IMR-90 (cell line): ENCODE measurements at regions of chr2 and their contacts with region 1.

Region 1: DNA sequence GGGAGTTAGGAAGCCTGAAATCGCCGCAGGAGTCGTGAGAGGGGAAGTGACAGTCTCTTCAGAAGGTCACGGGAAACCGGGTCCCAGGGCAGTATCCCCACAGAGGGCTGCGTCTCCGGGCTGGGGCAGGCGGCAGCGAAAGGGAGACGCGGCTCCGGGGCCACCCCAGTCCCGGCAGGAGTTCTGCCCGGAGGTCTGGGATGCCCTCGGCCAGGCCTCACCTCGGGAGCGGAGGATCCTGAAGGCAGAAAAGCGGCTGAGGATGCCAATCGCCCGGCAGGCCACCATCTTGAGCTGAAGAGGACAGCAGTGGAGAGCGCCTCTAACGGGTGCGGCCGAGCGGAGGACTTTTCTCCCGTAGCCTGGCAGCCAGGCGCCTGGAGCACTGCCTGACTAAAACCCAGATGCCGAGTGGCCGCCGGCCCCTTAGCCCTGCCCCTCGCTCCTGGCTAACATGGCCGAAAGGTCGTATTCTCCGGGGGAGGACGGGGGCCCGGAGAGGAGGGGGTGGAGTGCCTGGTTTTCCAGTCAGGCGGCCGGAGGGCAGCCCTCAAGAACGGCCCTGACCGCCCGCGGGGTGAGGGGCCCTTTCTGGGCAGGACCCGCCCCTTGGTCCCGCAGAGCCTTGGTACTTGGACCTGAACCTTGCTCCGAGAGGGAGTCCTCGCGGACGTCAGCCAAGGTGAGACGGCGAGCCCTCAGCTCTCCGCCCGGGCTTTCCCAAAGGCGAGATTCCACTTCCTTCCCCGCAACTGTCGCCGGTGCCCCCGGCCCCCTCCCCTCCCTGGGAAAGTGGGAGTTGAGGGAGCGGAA is at the starts of genes HADHA and HADHB:
- DNase-seq: peak; percentile 87
- ATAC-seq: peak; percentile 94
- H3K4me3 ChIP-seq: peak within 1 kb of the TSS; percentile 91
- H3K27ac ChIP-seq: peak within 1 kb of the TSS; percentile 91
- H3K4me1 ChIP-seq: peaks cover 6% of the 10 kb centered on the region
- H3K27me3 ChIP-seq: no peaks in the 10 kb centered on the region
- CTCF ChIP-seq: 0 out of 2 replicates have a peak, but pooled peaks have one; percentile 21
- POLR2A ChIP-seq: peak; percentile 87
- RAD21 ChIP-seq: no peak
- total RNA-seq, gene HADHA: 111 TPM in 2 replicates
- total RNA-seq, gene HADHB: 79.8 and 80.5 TPM in 2 replicates

Region 2: GRCh38 chr2:26274058-26274613 is 29.6 kb after region 1 on chr2:
- CTCF ChIA-PET with region 1: no interaction called
- POLR2A ChIA-PET with region 1: no interaction called
- dilution Hi-C with region 1: no loop called
- in situ Hi-C with region 1: no loop called
- intact Hi-C with region 1: no loop called
- DNase-seq: peak; percentile 90
- ATAC-seq: peak; percentile 74
- H3K4me3 ChIP-seq: no peak overlapping the region
- H3K27ac ChIP-seq: peak overlapping the region; percentile 60
- H3K4me1 ChIP-seq: peaks cover 7% of the 10 kb centered on the region; the same call in 1 of the 2 replicates
- H3K27me3 ChIP-seq: no peaks in the 10 kb centered on the region
- CTCF ChIP-seq: no peak
- POLR2A ChIP-seq: no peak
- RAD21 ChIP-seq: no peak

Region 3: DNA sequence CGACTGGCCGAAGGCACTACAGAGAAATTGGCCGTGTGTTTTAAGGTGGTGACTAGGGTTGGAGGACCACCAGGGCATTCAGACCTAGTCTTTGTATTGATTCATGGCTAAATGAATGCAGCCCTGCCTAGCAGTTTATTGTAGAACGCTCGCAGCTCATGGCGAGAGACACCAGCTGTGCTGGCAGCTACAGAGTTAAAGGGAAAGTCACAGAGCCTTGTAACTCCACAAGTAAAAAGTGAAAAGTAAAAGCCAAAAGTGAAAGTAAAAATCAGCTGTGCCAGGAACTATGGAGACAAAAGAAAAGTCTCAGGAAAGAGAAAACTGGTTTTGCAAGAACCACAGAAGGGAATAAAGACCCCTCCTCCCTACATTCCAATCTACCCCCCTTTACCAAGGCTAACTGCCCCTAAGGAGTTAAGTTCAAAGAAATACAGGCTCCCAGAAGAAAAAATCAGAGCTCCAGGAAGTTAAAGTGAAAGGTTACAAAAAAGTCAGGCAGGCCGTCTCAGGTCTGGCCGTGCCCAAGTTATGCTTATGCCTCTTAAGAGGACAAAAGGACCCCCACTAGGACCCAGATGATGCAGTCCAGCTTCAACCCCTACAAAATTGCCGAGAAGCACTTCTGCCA is 55.1 kb after region 1 on chr2:
- CTCF ChIA-PET with region 1: no interaction called
- POLR2A ChIA-PET with region 1: no interaction called
- dilution Hi-C with region 1: no loop called
- in situ Hi-C with region 1: no loop called
- intact Hi-C with region 1: loop called (anchors 1 kb)
- DNase-seq: peak; percentile 68
- ATAC-seq: peak; percentile 69
- H3K4me3 ChIP-seq: peak overlapping the region; percentile 31
- H3K27ac ChIP-seq: peak overlapping the region; percentile 76
- H3K4me1 ChIP-seq: peaks cover 12% of the 10 kb centered on the region
- H3K27me3 ChIP-seq: no peaks in the 10 kb centered on the region
- CTCF ChIP-seq: no peak
- POLR2A ChIP-seq: no peak
- RAD21 ChIP-seq: no peak

Region 4: DNA sequence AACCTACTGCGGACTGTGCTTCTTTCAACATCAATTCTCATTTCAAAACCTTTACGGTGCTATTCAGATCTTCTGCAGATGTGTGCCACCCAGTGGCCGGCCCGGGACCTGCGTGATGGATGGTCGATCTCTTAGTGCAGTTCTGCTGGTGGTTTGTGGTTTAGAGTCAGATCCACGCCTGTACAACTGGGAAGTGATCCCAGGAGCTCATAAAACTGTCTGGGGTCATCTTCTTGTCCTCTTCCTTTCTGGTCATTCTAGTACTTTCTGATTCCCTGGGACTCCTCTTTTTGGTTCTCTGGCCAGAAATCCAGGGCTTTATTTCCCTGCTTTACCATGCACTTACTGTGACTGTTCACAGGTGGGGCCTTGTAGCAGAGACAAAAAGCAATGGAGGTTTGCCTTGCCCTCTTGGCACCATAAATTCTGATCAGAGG is 85.6 kb after region 1 on chr2:
- CTCF ChIA-PET with region 1: no interaction called
- POLR2A ChIA-PET with region 1: no interaction called
- dilution Hi-C with region 1: no loop called
- in situ Hi-C with region 1: no loop called
- intact Hi-C with region 1: loop called (anchors 1 kb)
- DNase-seq: peak; percentile 79
- ATAC-seq: peak; percentile 94
- H3K4me3 ChIP-seq: no peak overlapping the region
- H3K27ac ChIP-seq: no peak overlapping the region
- H3K4me1 ChIP-seq: peaks cover 6% of the 10 kb centered on the region
- H3K27me3 ChIP-seq: peaks cover 6% of the 10 kb centered on the region
- CTCF ChIP-seq: peak; percentile 80
- POLR2A ChIP-seq: no peak
- RAD21 ChIP-seq: peak; percentile 84

Region 5: DNA sequence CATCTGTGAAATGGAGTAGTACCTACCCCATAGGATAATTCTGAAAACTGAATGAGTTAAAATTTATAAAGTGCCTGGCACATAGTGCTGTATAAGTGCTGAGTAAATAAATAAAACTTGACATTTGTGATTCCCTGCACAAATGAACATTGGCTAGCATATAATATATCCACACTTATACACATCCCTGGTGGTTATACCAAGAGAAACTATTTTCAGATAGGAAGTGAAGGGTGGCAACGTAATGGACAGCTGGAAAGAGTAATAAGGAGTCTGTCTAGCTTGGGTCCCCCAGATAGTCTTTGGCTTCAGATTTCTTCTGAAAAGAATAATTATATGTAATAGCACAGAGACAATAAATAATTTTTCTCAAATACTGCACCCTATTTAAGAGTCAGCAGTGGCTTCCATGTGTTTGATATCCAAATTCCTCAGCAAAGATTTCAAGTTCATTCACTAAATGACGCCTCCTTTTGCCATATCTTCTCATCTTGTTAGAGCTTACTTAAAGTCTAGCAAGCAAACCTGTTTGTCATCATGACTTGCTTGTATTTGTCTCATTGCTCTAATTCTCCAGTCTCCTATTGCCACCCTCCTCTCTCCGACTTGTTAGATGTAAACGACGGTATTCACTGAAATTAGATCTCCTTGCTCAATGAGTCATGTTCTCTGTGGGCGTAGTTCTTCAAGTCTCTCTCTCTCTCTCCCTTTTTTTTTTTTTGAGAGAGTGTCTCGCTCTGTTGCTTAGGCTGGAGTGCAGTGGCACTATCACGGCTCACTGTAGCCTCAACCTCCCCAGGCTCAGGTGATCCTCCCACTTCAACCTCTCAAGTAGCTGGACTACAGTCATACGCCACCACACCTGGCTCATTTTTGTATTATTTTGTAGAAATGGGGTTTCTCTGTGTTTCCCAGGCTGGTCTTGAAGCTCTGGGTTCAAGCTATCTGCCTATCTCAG is 110.8 kb after region 1 on chr2:
- CTCF ChIA-PET with region 1: no interaction called
- POLR2A ChIA-PET with region 1: no interaction called
- dilution Hi-C with region 1: no loop called
- in situ Hi-C with region 1: no loop called
- intact Hi-C with region 1: no loop called
- DNase-seq: peak; percentile 97
- ATAC-seq: peak; percentile 92
- H3K4me3 ChIP-seq: no peak overlapping the region
- H3K27ac ChIP-seq: peak overlapping the region; percentile 64; the same call in 1 of the 2 replicates
- H3K4me1 ChIP-seq: peaks cover 8% of the 10 kb centered on the region
- H3K27me3 ChIP-seq: no peaks in the 10 kb centered on the region
- CTCF ChIP-seq: no peak
- POLR2A ChIP-seq: no peak
- RAD21 ChIP-seq: no peak

Region 6: DNA sequence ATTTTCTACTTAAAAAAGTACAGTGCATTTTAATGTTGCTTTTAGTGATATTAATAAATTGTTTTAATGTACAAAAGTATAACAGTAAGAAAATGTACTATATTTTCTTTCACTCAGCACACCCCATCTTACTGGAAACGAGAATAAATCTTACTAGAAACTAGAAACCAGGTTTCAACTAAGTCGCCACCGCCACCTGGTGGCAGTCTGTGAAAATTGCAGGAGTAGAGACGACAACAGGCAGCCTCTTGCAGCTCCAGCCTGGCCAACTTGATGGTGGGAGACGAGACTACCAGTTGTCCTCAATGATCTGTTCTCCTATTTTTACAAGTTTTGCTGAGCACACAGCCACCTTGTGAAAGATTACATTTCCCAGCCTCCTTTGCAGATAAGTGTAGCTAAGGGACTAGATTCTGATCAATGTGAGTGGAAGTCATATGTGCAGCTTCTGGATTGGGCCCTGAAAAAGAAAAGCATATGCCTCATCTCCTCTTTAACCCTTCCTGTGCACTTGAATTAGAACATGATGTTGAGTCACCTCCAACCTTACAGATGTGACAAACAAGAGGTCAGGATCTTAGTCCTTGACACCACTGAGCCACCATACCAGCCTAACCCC is 224.7 kb after region 1 on chr2:
- CTCF ChIA-PET with region 1: no interaction called
- POLR2A ChIA-PET with region 1: no interaction called
- dilution Hi-C with region 1: no loop called
- in situ Hi-C with region 1: no loop called
- intact Hi-C with region 1: loop called (anchors 5 kb)
- DNase-seq: peak; percentile 59
- ATAC-seq: peak; percentile 72
- H3K4me3 ChIP-seq: no peak overlapping the region
- H3K27ac ChIP-seq: no peak overlapping the region
- H3K4me1 ChIP-seq: no peaks in the 10 kb centered on the region
- H3K27me3 ChIP-seq: no peaks in the 10 kb centered on the region; the same call in 1 of the 2 replicates
- CTCF ChIP-seq: peak; percentile 62
- POLR2A ChIP-seq: no peak
- RAD21 ChIP-seq: peak; percentile 65

Region 7: GRCh38 chr2:26577434-26578112 is 333.1 kb after region 1 on chr2:
- CTCF ChIA-PET with region 1: no interaction called
- POLR2A ChIA-PET with region 1: no interaction called
- dilution Hi-C with region 1: no loop called
- in situ Hi-C with region 1: no loop called
- intact Hi-C with region 1: loop called (anchors 10 kb)
- DNase-seq: peak; percentile 49
- ATAC-seq: peak; percentile 99
- H3K4me3 ChIP-seq: no peak overlapping the region
- H3K27ac ChIP-seq: no peak overlapping the region
- H3K4me1 ChIP-seq: no peaks in the 10 kb centered on the region
- H3K27me3 ChIP-seq: peaks cover 69% of the 10 kb centered on the region
- CTCF ChIP-seq: peak; percentile 91
- POLR2A ChIP-seq: no peak
- RAD21 ChIP-seq: peak; percentile 85